ENCODE measurements at regions of chr12 and their contacts with region 1.

Region 1: GRCh38 chr12:14514154-14514842 is 53.4 kb downstream of the PLBD1 start:
- DNase-seq: no peak
- ATAC-seq: peak; percentile 60 to 81

Region 2: GRCh38 chr12:14260011-14260993 is 254.0 kb before region 1 on chr12:
- intact Hi-C with region 1: no loop called
- DNase-seq: peak; percentile 96
- ATAC-seq: peak; percentile 56 to 64

Region 3: DNA sequence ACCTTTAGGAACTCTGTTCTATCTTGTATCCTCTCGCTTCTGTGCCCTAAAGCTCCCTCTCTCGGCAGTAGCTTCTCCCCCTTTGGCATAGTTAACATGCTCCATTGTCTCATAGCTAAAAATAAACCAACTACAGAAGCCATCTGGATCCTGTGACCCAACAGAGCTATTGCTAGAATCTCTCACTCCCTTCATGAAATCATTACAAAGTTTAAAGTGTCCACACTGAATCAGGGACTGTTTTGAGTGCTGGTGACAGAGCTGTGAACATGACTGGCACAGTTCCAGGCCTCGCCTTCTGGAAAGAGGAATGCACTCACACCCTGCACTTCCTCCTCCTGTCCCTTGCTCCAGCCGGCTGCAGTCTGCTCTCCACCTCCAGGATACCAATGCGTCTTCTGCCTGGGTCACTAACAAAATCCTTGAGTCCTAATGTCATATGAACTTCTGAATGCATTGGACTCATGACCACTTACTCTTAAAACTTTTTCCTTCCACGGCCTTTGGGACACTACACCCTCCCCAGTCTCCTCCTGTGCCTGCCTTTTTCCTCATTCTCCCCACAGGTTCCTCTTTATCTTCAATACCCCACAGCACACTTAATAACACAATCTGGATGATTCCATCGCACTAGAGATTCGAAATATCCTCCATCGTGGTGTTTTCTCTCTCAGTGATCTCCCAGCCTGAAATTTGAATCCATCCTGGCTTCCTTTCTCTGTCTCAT is 40.1 kb after region 1 on chr12:
- intact Hi-C with region 1: loop called in 1 of 2 experiments (anchors 5 kb)
- DNase-seq: peak; percentile 89
- ATAC-seq: peak; percentile 95 to 96

Region 4: DNA sequence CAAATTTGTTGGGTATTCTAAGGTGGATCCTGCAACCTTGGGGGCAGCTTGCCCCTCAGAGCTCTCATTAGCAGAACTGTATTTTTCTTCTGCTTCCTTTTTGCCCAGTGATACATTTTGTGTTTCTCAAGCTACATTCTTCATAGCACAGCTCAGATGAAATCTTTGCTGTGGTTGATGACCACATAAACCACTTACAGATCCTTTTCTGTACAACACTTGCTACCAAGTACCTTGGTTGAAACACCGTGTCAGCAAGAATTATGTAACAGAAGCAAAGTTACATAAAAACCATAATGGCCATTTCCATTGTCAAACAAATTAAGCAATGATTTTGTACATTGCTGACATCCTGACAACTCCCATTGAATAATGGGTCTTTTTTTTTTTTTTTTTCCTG is 63.0 kb after region 1 on chr12:
- intact Hi-C with region 1: no loop called
- DNase-seq: no peak
- ATAC-seq: no peak

Region 5: DNA sequence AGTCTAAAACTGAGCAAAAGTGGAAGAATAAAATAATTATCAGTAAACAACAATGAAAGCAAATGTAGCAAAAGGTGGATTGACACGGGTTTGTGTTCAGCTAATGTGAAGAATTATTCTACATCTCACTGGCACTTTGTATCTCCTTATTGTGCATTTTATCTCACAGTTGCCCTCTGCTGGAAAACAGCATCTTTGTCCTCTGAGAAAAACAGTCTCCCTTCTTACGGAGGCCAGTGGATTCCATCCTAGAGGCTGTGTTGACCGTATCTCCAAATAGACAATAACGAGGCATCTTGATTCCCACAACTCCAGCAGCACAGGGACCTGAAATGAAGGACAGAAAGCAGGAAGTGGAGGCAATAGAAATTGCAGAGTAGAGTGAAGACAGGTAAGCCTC is 104.7 kb after region 1 on chr12:
- intact Hi-C with region 1: loop called (anchors 10 kb)
- DNase-seq: no peak
- ATAC-seq: peak; percentile 24 to 59

Region 6: DNA sequence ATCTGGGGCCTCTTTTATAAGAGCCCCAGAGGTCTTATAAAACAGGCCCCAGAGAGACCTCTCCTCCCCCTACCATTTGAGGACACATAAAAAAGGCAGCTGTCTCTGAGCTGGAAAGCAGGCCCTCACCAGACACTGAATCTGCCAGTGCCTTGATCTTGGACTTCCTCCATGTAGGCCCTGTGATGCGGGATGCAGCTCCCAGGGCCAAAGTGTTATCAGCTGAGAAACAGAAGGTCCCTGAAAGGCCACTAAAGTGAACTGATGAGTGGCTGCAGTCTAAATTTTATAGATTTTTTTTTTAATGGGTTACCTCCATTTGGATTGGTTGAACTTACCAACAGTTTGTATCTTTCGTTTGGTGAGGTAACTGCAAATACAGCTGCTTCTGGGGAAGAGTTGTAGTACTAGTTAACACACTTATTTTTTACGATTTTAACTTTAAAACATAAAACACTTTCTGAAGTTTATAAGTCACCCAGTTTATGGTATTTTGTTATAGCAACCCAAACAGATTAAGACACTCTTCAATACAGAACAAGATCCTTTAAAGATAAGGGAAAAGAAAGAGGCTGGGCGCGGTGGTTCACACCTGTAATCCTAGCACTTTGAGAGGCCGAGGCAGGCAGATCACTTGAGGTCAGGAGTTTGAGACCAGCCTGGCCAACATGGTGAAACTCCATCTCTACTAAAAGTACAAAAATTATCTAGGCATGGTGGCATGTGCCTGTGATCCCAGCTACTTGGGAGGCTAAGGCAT is 187.7 kb after region 1 on chr12:
- intact Hi-C with region 1: no loop called
- DNase-seq: no peak
- ATAC-seq: no peak